Prostate gland (tissue), 2 donors: ENCODE measurements at regions of chr1 and their contacts with region 1.

Region 1: DNA sequence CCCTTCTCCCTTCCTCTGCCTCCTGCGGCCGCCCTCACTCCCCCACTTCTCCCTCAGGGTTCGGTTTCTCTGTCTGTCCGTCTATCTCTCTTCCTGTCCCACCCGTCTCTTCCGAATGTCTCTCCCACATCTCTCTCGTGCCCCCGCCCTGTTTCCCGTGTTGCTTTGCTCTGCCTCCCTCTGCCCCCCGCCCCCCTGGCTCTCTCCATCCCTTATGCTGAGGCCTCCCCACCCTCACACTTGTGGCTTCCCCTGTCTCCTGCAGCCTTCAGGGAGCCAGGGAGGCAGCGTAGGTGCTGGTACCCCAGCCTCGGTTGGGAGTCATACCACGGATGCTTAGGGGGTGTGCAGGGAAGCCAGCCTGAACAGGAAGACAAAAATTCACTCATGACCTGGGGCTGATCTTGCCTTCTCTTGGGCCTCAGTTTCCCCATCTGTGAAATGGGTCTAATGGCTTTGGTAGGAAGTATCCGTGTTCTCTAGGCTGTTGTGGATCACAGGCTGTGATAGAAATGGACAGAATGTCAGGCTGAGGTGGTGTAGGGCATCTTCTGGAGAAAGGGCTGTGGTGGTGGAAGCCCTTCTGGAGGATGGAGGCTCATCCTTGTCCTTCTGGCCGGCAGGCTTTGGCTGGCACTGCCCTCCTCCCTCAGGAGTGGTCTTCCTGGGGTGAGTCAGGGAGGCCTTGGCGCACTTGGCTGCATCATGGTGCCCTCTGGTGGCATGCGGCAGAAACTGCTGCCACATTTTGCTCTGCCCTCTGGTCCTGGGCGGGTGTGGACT is 55.5 kb downstream of the FOXO6 start:
- DNase-seq: peak; percentile 44
- H3K4me3 ChIP-seq: no peak overlapping the region
- H3K27ac ChIP-seq: no peak overlapping the region
- H3K4me1 ChIP-seq: no peaks in the 10 kb centered on the region
- H3K27me3 ChIP-seq: no peaks in the 10 kb centered on the region
- CTCF ChIP-seq: peak; percentile 82 to 96 (median 92)
- POLR2A ChIP-seq: no peak

Region 2: DNA sequence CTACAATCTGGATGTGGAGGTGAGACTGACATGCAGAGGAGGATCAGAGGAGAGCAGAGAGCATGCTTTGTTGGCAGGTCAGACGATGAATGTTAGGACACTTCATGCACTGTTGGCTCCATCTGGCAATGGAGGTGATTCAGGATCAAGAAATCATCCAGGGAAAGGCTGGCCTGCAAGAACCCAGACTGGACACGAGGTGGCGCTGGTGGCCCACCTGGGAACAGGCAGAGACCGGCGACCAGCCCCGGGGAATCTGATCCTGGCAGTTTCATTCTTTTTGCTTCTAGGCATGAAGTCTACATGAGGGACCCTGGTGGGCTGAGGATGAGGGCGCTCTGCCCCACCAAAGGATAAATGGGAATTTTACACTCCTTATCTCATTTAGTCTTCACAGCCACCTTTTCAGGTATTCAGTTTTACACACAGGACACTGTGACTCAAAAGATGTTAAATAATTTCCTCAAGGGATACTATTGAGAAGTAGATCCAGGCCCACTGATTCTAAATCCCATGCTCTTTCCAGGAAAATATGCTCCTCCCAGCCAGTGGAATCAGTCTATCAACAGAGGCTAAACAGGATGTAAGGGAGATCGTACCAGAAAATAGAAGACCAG is 148.5 kb before region 1 on chr1:
- intact Hi-C with region 1: loop called (anchors 5 kb)
- DNase-seq: peak; percentile 70
- H3K4me3 ChIP-seq: no peak overlapping the region
- H3K27ac ChIP-seq: no peak overlapping the region
- H3K4me1 ChIP-seq: no peaks in the 10 kb centered on the region
- H3K27me3 ChIP-seq: no peaks in the 10 kb centered on the region
- CTCF ChIP-seq: peak; percentile 94 to 97 (median 95)
- POLR2A ChIP-seq: no peak

Region 3: DNA sequence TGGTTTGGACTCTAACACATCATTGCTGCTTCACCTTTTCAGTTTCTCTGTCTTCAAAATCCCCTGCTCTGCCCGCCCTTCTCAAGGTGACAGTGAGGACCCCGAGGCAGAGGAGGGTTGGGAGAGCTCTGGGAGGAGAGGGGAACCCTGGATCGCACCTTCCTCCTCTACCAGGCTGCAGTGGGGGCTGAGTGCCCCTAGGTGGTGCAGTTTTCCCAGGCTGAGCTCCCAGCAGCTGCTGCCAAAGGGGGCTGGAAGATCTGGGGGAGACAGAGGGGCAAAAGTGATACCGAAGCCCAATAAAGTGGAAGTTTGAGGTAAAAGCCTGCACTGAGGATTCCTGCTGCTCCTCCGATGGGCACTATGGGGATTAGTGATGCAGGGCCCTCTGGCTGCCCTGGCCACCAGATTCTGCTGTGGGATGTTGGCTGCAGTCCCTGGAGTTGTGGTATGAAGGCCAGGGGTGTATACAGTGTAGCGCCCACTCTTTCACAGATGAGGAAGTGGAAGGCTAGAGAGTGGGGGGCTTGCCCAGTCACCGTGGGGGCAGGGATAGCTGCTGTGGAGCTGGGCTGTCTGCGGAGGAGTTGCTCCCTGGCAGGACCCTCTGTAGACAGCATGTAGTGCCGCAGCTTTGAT is 133.9 kb before region 1 on chr1:
- intact Hi-C with region 1: loop called (anchors 5 kb)
- DNase-seq: no peak
- H3K4me3 ChIP-seq: no peak overlapping the region
- H3K27ac ChIP-seq: no peak overlapping the region
- H3K4me1 ChIP-seq: no peaks in the 10 kb centered on the region
- H3K27me3 ChIP-seq: no peaks in the 10 kb centered on the region
- CTCF ChIP-seq: peak; percentile 40 to 83 (median 64)
- POLR2A ChIP-seq: no peak

Region 4: GRCh38 chr1:41360993-41361753 is 55.6 kb before region 1 on chr1 and contains the start of gene FOXO6:
- intact Hi-C with region 1: loop called (anchors 5 kb)
- DNase-seq: peak; percentile 99
- H3K4me3 ChIP-seq: peak within 1 kb of the TSS; percentile 39 to 56
- H3K27ac ChIP-seq: peak within 1 kb of the TSS; percentile 26 to 70
- H3K4me1 ChIP-seq: peaks cover 13% of the 10 kb centered on the region
- H3K27me3 ChIP-seq: no peaks in the 10 kb centered on the region
- CTCF ChIP-seq: peak in 3 of 4 experiments; percentile 57 to 96 (median 88)
- POLR2A ChIP-seq: no peak
- total RNA-seq, gene FOXO6: 3.3 to 5.0 TPM